Mammary epithelial cell (primary cell): ENCODE measurements at regions of chr4 and their contacts with region 1.

Region 1: DNA sequence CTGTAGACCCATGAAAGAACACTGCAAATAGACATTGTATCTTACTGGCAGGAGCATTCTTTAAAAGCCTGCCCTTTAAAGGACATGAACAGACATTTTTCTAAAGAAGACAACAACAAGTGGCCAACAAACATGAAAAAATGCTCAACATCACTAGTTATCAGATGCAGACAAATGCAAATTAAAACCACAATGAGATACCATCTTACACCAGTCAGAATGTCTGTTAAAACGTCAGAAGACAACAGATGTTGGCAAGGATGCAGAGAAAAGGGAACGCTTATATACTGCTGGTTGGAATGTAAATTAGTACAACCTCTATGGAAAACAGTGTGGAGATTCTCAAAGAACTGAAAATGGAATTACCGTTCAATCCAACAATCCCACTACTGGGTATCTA is 77.2 kb downstream of the ATP10D start:
- DNase-seq: no peak
- H3K4me3 ChIP-seq: no peak overlapping the region
- H3K27ac ChIP-seq: no peak overlapping the region
- H3K4me1 ChIP-seq: peaks cover 15% of the 10 kb centered on the region
- H3K27me3 ChIP-seq: no peaks in the 10 kb centered on the region
- CTCF ChIP-seq: no peak

Region 2: GRCh38 chr4:47383829-47384427 is 178.4 kb before region 1 on chr4:
- CTCF ChIA-PET with region 1: no interaction called
- dilution Hi-C with region 1: no loop called
- in situ Hi-C with region 1: no loop called
- intact Hi-C with region 1: loop called (anchors 5 kb)
- DNase-seq: peak; percentile 11
- H3K4me3 ChIP-seq: no peak overlapping the region
- H3K27ac ChIP-seq: no peak overlapping the region
- H3K4me1 ChIP-seq: no peaks in the 10 kb centered on the region
- H3K27me3 ChIP-seq: no peaks in the 10 kb centered on the region
- CTCF ChIP-seq: peak; percentile 32 to 55

Region 3: GRCh38 chr4:47463235-47463956 is 98.9 kb before region 1 on chr4 and contains the start of gene COMMD8:
- CTCF ChIA-PET with region 1: interaction called, 3 read pairs
- dilution Hi-C with region 1: no loop called
- in situ Hi-C with region 1: no loop called
- intact Hi-C with region 1: loop called (anchors 1 kb)
- DNase-seq: peak; percentile 94
- H3K4me3 ChIP-seq: peak within 1 kb of the TSS; percentile 64 to 79 (median 73)
- H3K27ac ChIP-seq: peak within 1 kb of the TSS; percentile 80
- H3K4me1 ChIP-seq: peaks cover 13% of the 10 kb centered on the region
- H3K27me3 ChIP-seq: no peaks in the 10 kb centered on the region
- CTCF ChIP-seq: peak in 1 of 2 donors; percentile 35
- total RNA-seq, gene COMMD8: 27.2 to 29.5 TPM

Region 4: DNA sequence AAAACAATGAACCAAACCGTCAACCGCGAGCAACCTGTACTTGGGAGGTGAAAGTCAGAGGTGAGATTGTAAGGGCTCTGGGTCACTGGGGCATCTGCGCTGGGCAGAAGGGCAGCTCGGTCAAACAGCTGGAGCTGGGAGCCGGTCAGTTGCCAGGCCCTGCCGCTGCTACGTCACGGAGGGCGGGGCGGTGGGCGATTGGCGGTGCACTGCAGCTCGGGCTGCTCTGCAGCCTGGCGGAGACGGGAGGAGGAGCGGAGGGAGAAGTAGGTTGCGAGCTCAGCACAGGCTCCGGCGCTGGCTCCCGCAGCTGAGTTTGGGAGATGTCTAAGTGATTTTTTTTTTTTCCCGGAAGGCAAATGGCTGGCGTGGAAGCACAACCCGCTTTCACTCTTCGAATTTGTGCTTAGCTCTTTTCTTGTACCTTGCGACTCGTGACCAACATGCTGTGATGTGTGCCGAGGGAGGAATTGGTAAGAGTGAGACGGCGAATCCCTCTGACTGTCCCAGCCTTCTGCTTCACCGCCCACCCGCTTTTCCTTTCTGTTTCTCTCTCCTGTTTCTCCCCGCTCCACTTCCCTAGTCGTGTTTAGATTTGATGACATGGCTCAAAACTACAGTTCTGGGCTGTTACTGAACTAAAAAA is 77.1 kb before region 1 on chr4 and contains the start of gene ATP10D:
- CTCF ChIA-PET with region 1: no interaction called
- dilution Hi-C with region 1: no loop called
- in situ Hi-C with region 1: no loop called
- intact Hi-C with region 1: loop called (anchors 1 kb)
- DNase-seq: peak; percentile 91
- H3K4me3 ChIP-seq: peak within 1 kb of the TSS; percentile 45 to 91 (median 79)
- H3K27ac ChIP-seq: peak within 1 kb of the TSS; percentile 85
- H3K4me1 ChIP-seq: peaks cover 25% of the 10 kb centered on the region
- H3K27me3 ChIP-seq: no peaks in the 10 kb centered on the region
- CTCF ChIP-seq: peak in 1 of 2 donors; percentile 36
- total RNA-seq, gene ATP10D: 71.6 to 88.4 TPM

Region 5: DNA sequence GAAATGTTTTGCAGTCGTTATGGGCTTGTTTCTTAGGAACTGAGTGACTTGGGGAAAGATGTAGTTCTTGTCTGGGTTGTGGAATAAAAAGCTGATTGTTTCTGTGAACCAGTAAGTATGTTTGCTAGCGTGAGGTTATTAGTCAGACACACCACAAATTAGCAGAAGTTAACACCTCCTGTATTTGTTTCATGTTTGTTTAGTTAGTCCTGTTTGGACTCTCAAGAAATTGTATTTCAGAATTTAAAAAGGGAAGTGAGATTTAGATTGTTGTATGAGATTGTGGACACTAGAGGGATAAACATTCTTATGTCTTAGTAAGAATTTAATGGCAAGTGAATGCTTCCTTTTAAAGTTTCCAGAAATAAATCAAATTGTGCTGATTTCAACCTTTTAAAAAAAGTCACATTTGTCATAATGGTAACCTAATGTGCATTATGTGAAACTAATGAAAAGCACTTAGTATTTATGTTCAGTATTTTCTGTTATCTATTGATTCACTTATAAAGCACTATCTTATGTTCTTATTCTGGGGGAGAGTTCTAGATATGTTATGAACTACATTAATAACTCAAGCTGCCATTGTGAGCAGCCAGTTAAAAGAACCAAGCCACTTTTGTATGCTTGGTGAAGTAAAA is 51.7 kb before region 1 on chr4:
- CTCF ChIA-PET with region 1: no interaction called
- dilution Hi-C with region 1: loop called (anchors 5 kb)
- in situ Hi-C with region 1: no loop called
- intact Hi-C with region 1: loop called (anchors 1 kb)
- DNase-seq: no peak
- H3K4me3 ChIP-seq: no peak overlapping the region
- H3K27ac ChIP-seq: peak overlapping the region; percentile 13
- H3K4me1 ChIP-seq: peaks cover 20% of the 10 kb centered on the region
- H3K27me3 ChIP-seq: no peaks in the 10 kb centered on the region
- CTCF ChIP-seq: peak; percentile 19 to 34